ENCODE measurements at regions of chr6 and their contacts with region 1.

Region 1: DNA sequence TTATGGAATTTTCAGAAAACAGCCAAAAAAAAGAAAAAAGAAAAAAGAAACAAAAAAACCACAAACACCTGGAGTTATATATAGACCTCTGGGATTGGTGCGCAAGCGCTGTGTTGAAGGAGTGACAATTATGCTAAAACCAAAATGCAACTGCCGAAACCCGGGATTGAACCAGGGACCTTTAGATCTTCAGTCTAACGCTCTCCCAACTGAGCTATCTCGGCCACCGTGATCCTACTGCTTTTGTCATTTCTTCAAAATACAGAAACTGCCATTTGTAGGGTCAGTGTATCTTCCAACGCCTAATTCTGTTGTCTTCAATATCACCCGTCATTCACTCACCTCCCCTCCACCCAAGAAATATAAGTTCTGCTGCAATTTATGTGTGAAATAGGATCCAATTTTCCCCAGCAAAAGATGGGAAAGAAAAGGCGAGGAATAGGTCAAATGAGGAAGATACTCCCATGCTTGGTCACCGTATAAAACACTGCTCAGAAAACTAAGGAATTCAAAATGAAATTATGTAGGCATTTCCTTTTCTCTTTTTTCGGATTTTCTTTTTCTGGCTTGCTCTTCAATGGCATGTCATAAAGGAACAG is 116.0 kb downstream of the TRIM27 start:
- DNase-seq: no peak
- H3K4me3 Mint-ChIP-seq: no peak overlapping the region
- H3K27ac Mint-ChIP-seq: no peak overlapping the region
- H3K4me1 Mint-ChIP-seq: peaks cover 20% of the 10 kb centered on the region
- H3K27me3 Mint-ChIP-seq: peaks cover 75% of the 10 kb centered on the region

Region 2: DNA sequence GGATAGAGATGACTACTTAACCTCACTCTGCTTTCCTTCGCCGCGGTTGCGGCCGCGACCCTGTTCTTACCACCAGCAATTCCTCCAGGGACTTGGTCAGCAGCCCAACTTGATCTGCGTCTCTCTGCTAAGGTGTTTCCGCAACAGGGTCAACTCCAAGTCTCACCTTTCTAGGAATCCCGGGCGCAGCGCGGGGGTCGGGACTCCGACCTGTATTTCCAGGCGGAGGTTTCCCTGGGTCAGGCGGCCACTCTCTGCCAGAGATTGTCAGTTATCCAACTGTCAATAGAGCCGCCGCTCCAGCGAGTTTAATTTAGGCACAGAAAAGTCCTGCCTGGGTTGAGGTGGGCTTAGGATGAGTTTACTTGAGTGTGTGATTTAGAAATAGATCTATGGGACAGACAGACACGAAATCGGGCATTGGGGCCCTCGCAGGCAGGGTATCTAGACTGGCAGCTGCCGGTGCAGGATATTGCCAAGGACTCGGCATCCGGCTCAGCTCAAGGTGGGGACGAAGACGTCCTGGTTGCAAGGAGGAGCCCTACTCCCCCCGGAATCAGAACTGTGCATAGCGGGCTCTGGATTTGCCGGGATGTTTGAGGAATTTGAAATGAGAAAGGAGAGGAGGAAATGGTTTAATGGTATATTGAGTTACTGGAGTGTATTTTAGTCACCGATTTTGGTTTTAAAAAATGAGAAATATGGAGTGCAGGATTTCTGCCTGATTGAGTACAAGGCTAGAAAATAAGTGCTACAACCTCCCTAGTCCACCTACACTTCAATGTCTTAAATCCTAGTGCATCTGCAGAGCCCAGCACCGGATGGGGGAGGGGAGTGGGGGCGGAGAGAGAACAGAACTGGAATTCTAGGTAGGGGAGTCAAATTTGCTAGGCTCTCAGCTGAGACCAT is 1519.4 kb before region 1 on chr6:
- intact Hi-C with region 1: loop called (anchors 5 kb)
- DNase-seq: no peak
- H3K4me3 Mint-ChIP-seq: no peak overlapping the region
- H3K27ac Mint-ChIP-seq: no peak overlapping the region
- H3K4me1 Mint-ChIP-seq: peaks cover 15% of the 10 kb centered on the region
- H3K27me3 Mint-ChIP-seq: peaks cover 85% of the 10 kb centered on the region

Region 3: GRCh38 chr6:28729501-28730402 is 78.0 kb before region 1 on chr6:
- intact Hi-C with region 1: loop called (anchors 1 kb)
- DNase-seq: no peak
- H3K4me3 Mint-ChIP-seq: peak overlapping the region; percentile 87
- H3K27ac Mint-ChIP-seq: peak overlapping the region; percentile 76
- H3K4me1 Mint-ChIP-seq: peaks cover 19% of the 10 kb centered on the region
- H3K27me3 Mint-ChIP-seq: peaks cover 82% of the 10 kb centered on the region

Region 4: DNA sequence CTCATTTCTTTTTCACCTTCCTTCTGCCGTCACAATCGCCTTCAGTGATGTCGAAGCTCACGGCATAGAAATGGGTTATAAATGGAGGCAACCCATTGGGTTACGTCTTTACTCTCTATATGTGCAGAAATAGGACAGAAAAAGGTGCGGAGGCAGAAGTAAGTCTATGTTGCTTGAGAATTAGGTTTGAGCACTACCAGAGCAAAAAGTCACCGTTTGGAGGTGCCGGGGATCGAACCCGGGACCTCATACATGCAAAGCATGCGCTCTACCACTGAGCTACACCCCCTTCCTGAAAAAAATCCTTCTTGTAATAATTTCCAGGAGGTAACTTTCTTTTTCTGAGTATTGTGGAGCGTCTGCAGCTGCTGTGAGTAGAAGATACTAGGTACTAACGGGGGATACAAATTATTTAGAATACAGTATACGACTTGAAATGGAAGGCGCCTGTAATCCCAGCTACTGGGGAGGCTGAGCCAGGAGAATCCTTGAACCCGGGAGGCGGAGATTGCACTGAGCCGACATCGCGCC is 18.2 kb before region 1 on chr6:
- intact Hi-C with region 1: loop called (anchors 2 kb)
- DNase-seq: no peak
- H3K4me3 Mint-ChIP-seq: peak overlapping the region; percentile 70
- H3K27ac Mint-ChIP-seq: peak overlapping the region; percentile 35
- H3K4me1 Mint-ChIP-seq: peaks cover 19% of the 10 kb centered on the region
- H3K27me3 Mint-ChIP-seq: peaks cover 83% of the 10 kb centered on the region

Region 5: DNA sequence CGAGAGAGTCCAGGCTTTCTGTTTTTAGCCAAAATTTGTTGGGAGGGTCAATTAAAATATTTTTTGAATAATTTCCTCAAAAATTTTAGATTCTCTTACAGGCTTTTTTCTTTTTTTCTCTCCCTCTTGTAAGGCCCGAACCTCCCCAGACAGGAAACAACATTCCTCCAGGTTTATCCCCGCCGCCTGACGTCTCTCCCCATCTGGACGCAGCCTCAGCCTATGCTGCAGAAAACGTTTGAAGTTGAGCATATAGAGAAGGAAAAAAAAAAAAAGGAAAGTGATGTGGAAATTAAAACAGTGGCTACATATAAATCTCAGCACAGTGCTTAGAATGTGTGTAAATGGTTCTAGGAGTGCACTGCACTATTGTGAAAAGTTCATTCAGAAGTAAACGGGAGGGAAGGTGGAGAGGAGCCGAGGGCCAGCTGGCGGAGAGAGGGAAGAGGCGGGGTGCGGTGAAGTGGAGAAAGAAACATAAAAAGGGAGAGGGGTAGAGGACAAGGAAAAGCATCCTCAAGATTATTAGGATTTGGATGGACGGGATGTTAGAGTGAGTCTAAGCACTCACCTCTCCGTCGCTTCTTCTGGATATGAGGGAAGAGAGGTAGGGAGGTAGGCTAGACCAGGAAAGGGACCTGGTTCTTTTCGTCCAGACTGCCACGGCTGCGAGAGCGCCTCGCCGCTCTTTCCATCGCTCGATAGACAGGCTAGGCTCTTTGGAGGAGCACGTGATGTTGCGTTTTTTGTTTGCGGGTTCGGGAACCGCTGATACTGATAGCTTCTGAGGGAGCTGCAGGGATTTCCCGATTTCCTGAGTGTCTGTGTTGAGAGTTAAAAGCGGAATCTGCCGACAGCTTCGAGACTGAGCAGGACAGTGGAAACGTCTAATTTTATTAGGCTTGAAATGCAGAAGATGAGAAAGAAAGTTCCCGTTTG is 17.3 kb after region 1 on chr6:
- intact Hi-C with region 1: loop called (anchors 2 kb)
- DNase-seq: no peak
- H3K4me3 Mint-ChIP-seq: no peak overlapping the region
- H3K27ac Mint-ChIP-seq: no peak overlapping the region
- H3K4me1 Mint-ChIP-seq: peaks cover 3% of the 10 kb centered on the region
- H3K27me3 Mint-ChIP-seq: peaks cover 65% of the 10 kb centered on the region

Measured in activated T-helper 2 cell treated with anti-CD3 and anti-CD28 coated beads, Interferon-gamma antibody, Interleukin-2, Interleukin-4, amounts not matched to agents 10 μg/mL and 5 μg/mL and 100 μg/mL, durations not matched to agents 14 hours and 24 hours and 36 hours (primary cell).